HEK293 (cell line): ENCODE measurements at regions of chr2 and their contacts with region 1.

Region 1: GRCh38 chr2:112726497-112727190 is 5.8 kb downstream of the NT5DC4 start:
- H3K4me3 ChIP-seq: no peak overlapping the region
- H3K27ac ChIP-seq: no peak overlapping the region
- H3K4me1 ChIP-seq: no peaks in the 10 kb centered on the region
- CTCF ChIP-seq: peak; percentile 98

Region 2: GRCh38 chr2:112601751-112602150 is 124.9 kb before region 1 on chr2:
- CTCF ChIA-PET with region 1: interaction called, 103 read pairs
- POLR2A ChIA-PET with region 1: no interaction called
- H3K4me3 ChIP-seq: no peak overlapping the region
- H3K27ac ChIP-seq: no peak overlapping the region
- H3K4me1 ChIP-seq: no peaks in the 10 kb centered on the region
- CTCF ChIP-seq: no peak

Region 3: DNA sequence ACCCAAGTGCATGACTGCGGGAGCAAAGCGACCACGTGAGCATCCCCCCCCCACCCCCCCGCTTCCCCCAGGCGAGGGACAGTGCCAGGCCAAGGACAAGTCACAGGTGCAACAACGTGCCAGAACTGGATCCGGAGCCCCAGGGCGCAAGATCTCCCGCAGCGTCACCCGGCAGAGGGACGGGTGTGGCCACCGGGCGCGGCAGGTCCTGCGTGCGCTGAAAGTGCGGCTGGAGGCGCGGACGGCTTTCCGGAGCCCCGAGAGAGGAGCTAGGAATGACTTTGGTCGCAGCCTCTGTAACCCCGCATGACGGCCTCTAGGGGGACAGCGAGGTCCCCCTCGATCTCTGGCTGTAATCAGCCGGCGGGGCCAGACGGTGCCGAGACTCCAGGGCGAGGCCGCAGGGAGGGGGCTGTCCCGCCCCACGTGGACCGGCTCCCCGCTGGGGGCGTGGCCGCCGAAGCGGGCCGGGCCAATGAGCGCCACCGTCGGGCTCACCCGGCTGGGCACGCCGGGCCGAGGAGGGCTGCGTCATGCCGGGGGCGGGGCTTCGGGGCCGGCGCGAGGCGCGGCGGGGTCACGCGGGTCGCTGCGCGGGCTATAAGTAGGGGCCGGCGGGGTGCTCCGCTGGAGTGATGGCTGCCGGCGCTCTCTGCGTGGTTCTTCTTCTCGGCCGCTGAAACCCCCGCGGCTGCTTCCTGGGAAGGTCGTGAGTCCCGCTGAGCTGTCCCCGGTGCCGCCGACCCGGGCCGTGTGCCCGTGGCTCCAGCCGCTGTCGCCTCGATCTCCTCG is 81.1 kb before region 1 on chr2 and contains the start of gene SLC20A1:
- CTCF ChIA-PET with region 1: interaction called, 19 read pairs
- POLR2A ChIA-PET with region 1: interaction called, 8 read pairs
- H3K4me3 ChIP-seq: peak within 1 kb of the TSS; percentile 93
- H3K27ac ChIP-seq: peak within 1 kb of the TSS; percentile 97
- H3K4me1 ChIP-seq: peaks cover 4% of the 10 kb centered on the region
- CTCF ChIP-seq: peak; percentile 83

Region 4: GRCh38 chr2:112706170-112706664 is 20.4 kb before region 1 on chr2:
- CTCF ChIA-PET with region 1: interaction called, 58 read pairs
- POLR2A ChIA-PET with region 1: no interaction called
- H3K4me3 ChIP-seq: no peak overlapping the region
- H3K27ac ChIP-seq: no peak overlapping the region
- H3K4me1 ChIP-seq: no peaks in the 10 kb centered on the region
- CTCF ChIP-seq: no peak

Region 5: DNA sequence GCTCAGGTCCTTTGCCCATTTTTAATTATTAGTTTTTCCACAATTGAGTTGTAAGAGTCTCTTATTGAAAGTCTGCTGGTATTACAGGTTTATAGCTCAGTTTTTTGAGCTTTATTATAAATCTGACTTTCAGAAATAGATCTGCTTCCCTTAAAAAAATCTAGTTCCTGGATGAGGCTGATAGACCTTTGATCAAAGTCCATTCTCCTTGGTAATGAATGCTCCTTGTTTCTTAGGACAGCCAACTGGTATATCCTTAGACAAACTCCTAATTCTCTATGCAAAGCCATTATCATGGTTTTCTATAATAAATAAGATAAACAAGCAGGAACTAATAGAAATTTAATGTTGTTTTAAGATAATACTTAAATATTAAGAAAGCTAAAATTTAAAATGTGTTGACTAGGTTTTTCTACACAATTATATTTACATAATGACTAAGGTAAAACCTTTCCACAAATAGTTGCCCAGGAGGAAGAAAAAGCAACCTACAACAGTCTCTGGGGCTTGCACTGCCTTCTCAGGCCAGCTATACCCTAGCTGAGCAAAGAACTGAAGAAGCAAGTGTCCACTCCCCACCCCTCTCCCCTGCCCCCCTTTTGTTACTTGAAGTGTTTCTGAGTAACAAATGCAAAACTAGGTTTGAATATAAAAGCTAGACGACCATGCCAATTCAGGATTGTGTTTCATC is 11.0 kb after region 1 on chr2:
- CTCF ChIA-PET with region 1: interaction called, 29 read pairs
- POLR2A ChIA-PET with region 1: no interaction called
- H3K4me3 ChIP-seq: no peak overlapping the region
- H3K27ac ChIP-seq: no peak overlapping the region
- H3K4me1 ChIP-seq: no peaks in the 10 kb centered on the region
- CTCF ChIP-seq: no peak

Region 6: DNA sequence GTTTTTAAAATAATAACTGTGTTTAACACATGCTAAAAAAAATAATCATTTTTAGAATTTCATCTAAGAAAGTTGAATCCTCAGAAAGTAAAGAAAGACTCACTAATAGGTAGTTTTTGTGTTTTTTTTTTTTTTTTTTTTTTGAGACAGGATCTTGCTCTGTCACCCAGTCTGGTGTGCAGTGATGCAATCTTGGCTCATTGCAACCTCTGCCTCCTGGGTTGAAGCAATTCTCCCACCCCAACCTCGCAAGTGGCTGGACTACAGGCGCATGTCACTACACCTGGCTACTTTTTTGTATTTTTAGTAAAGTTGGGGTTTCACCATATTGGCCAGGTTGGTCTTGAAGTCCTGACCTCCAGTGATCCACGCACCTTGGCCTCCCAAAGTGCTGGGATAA is 30.6 kb after region 1 on chr2:
- CTCF ChIA-PET with region 1: no interaction called
- POLR2A ChIA-PET with region 1: no interaction called
- H3K4me3 ChIP-seq: no peak overlapping the region
- H3K27ac ChIP-seq: no peak overlapping the region
- H3K4me1 ChIP-seq: peaks cover 8% of the 10 kb centered on the region
- CTCF ChIP-seq: no peak

Region 7: DNA sequence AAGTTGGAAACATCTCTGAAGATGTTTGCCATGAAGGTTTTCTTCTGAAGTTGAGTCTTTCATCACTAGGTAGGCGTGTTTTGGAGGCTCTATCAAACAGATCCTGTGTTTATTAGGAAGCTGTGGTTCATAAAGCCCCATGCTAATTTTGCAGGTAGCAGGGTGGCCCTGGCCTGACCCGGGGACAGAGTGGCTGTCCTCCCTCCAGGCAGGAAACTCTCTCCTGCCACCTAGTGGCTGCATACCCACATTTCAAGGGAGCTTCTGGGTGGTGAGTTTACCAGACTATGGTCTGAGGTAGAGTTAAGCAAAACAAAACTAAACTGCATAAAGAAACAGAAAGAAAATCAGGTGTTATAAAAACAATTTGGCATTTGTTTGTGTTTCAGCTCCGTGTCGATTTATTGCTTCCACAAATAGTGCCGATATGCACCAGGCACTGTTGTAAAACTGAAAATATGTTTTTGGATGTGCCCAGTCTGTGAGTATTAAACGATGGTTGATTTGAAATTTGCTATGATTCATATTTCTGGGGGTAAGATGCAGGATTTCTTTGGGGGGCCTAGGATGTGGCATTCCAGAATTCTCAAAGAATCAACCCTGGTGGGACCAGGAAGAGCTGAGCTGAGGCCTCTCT is 158.3 kb after region 1 on chr2:
- CTCF ChIA-PET with region 1: interaction called, 19 read pairs
- POLR2A ChIA-PET with region 1: no interaction called
- H3K4me3 ChIP-seq: no peak overlapping the region
- H3K27ac ChIP-seq: no peak overlapping the region
- H3K4me1 ChIP-seq: peaks cover 2% of the 10 kb centered on the region; the same call in 1 of the 2 replicates
- CTCF ChIP-seq: peak; percentile 48